ENCODE measurements at regions of chr10 and their contacts with region 1.

Region 1: DNA sequence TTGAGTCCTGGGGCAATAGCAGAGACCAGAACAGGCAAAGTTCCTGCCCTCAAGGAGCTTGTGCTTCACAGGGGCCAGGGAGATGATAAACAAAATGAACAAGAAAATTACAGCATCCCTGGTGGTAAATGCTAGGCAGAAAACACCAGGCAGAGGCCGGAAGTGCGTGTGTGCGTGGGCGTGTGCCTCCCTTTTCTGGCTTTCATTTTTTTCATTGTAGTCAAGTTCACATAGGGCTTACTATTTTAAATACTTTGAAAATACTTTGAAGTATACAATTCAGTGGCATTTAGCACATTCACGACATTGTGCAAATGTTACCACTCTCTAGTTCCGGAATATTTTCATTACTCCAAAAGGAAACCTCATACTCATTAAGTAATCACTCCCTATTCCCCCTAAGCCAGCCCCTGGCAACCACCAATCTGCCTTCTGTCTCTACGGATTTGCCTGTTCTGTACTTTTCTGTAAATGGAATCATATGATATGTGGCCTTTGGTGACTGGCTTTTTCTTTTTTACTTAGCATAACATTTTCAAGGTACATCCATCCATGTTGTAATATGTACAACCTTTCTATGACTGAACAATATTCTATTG is 88.1 kb upstream of the PDCD4 start:
- DNase-seq: no peak

Region 2: GRCh38 chr10:110746254-110746826 is 37.3 kb before region 1 on chr10:
- intact Hi-C with region 1: loop called (anchors 5 kb)
- DNase-seq: no peak

Measured in cardiac septum (tissue), 1 donor.